IMR-90 (cell line): ENCODE measurements at regions of chr2 and their contacts with region 1.

Region 1: DNA sequence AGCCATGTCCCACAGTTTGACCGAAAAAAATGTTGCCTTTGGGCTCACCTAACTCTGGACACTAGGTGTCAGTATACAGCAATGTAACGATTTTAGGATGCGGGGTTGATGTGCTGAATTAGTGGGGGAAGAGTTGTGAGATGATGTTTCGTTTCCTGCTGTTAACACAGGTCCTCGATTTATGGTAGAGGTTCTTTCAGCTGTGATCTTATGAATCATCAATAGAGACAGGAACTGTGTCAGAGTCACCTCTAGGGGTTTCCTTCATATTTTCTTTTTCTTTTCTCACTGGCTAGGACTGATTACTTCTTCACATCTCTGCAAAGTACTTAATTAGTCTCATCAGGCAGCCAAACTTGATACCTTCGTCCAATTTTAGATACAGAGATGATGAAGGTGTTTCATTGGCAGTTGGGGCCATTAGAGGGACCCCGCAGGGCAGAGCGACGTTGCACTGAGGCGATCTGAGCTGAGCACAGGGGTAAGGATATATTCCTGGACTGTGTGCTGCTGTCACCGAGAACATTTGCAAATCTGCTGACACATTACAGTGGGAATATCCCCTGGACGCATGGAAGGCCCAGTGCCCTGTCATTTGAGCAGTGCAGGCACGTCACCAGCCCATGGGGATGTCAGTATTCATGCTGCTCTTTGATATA is 10.2 kb upstream of the MMADHC start:
- DNase-seq: peak; percentile 94
- ATAC-seq: peak; percentile 89
- H3K4me3 ChIP-seq: peak overlapping the region; percentile 13; the same call in 1 of the 2 replicates
- H3K27ac ChIP-seq: peak overlapping the region; percentile 64
- H3K4me1 ChIP-seq: peaks cover 8% of the 10 kb centered on the region
- H3K27me3 ChIP-seq: no peaks in the 10 kb centered on the region
- CTCF ChIP-seq: peak; percentile 93
- POLR2A ChIP-seq: 0 out of 2 replicates have a peak, but pooled peaks have one; percentile 40
- RAD21 ChIP-seq: peak; percentile 97

Region 2: GRCh38 chr2:149342523-149342922 is 255.3 kb before region 1 on chr2:
- CTCF ChIA-PET with region 1: no interaction called
- POLR2A ChIA-PET with region 1: no interaction called
- dilution Hi-C with region 1: no loop called
- in situ Hi-C with region 1: no loop called
- intact Hi-C with region 1: no loop called
- DNase-seq: no peak
- ATAC-seq: no peak
- H3K4me3 ChIP-seq: no peak overlapping the region
- H3K27ac ChIP-seq: no peak overlapping the region
- H3K4me1 ChIP-seq: no peaks in the 10 kb centered on the region
- H3K27me3 ChIP-seq: no peaks in the 10 kb centered on the region
- CTCF ChIP-seq: no peak
- POLR2A ChIP-seq: no peak
- RAD21 ChIP-seq: no peak

Region 3: DNA sequence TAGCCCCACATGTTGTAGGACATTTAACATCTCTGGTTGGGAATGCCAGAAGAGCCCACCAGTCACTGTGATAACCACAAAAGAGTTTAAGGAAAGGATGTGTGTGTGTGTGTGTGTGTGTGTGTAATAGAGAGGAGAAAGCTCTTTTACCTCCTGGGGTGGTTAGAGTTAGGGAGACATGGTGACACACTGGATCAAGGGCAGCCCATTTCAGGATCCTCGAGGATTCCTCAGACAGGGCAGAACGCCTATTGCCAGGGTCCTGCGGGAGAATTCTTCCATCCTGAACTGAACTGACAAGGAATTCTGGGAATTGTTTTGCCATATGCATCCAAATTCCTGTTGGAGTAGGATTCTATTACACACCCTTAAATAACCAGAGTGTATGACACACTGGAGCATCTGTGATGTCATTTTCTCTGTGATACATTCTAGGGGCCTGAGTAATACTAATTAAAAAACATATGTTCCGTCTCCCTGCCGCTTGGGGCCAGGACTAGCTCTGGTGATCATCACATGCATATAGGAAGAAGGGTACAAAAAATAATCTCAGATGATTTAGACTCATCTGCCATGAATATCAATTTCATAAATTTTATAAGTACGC is 146.1 kb after region 1 on chr2:
- CTCF ChIA-PET with region 1: interaction called, 4 read pairs
- POLR2A ChIA-PET with region 1: no interaction called
- dilution Hi-C with region 1: no loop called
- in situ Hi-C with region 1: no loop called
- intact Hi-C with region 1: loop called (anchors 5 kb)
- DNase-seq: peak; percentile 97
- ATAC-seq: peak; percentile 73
- H3K4me3 ChIP-seq: no peak overlapping the region
- H3K27ac ChIP-seq: peak overlapping the region; percentile 98
- H3K4me1 ChIP-seq: peaks cover 36% of the 10 kb centered on the region
- H3K27me3 ChIP-seq: no peaks in the 10 kb centered on the region
- CTCF ChIP-seq: peak; percentile 48
- POLR2A ChIP-seq: no peak
- RAD21 ChIP-seq: peak; percentile 53

Region 4: GRCh38 chr2:150097891-150098595 is 500.2 kb after region 1 on chr2:
- CTCF ChIA-PET with region 1: no interaction called
- POLR2A ChIA-PET with region 1: no interaction called
- dilution Hi-C with region 1: no loop called
- in situ Hi-C with region 1: no loop called
- intact Hi-C with region 1: loop called (anchors 10 kb)
- DNase-seq: peak; percentile 59
- ATAC-seq: peak; percentile 74
- H3K4me3 ChIP-seq: no peak overlapping the region
- H3K27ac ChIP-seq: no peak overlapping the region
- H3K4me1 ChIP-seq: peaks cover 4% of the 10 kb centered on the region; the same call in 1 of the 2 replicates
- H3K27me3 ChIP-seq: no peaks in the 10 kb centered on the region
- CTCF ChIP-seq: peak; percentile 44
- POLR2A ChIP-seq: no peak
- RAD21 ChIP-seq: no peak; the same call in 1 of the 2 replicates

Region 5: DNA sequence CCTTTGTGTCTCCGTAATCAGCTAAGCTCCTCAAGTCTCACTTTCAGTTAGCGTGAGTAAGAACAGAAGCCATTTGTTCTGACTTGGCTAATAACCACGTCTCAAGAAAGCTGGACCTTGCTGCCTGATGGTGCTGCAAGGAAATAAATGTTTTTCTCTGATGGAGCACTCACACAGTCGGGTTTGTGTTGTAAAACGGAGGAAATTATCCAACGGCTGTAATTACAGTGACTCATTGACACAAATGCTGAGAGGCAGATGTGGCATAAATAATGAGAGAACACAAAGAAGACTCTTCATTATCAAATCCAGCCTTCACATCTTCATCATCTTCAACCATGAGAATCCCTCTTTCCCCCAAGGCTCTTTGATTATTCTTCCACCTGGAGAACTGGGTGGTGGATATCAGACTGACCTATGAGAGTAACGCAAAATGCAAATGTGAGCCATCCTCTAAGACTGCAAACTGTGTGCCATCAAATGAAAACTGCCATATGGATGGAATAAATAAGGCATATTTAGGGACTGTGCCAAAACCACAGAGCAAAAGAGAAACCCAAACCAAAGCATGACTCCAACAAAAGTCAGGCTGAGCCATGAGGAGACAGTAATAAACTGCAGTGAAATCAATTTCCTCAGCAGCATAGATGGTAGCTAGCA is 637.1 kb after region 1 on chr2:
- CTCF ChIA-PET with region 1: no interaction called
- POLR2A ChIA-PET with region 1: no interaction called
- dilution Hi-C with region 1: no loop called
- in situ Hi-C with region 1: no loop called
- intact Hi-C with region 1: no loop called
- DNase-seq: peak; percentile 93
- ATAC-seq: peak; percentile 94
- H3K4me3 ChIP-seq: peak overlapping the region; percentile 20; the same call in 1 of the 2 replicates
- H3K27ac ChIP-seq: peak overlapping the region; percentile 88
- H3K4me1 ChIP-seq: peaks cover 6% of the 10 kb centered on the region
- H3K27me3 ChIP-seq: no peaks in the 10 kb centered on the region
- CTCF ChIP-seq: no peak
- POLR2A ChIP-seq: no peak
- RAD21 ChIP-seq: peak; percentile 27

Region 6: GRCh38 chr2:150271952-150272802 is 674.4 kb after region 1 on chr2:
- CTCF ChIA-PET with region 1: no interaction called
- POLR2A ChIA-PET with region 1: no interaction called
- dilution Hi-C with region 1: no loop called
- in situ Hi-C with region 1: no loop called
- intact Hi-C with region 1: loop called (anchors 5 kb)
- DNase-seq: peak; percentile 93
- ATAC-seq: peak; percentile 97
- H3K4me3 ChIP-seq: no peak overlapping the region
- H3K27ac ChIP-seq: peak overlapping the region; percentile 75; the same call in 1 of the 2 replicates
- H3K4me1 ChIP-seq: peaks cover 5% of the 10 kb centered on the region; the same call in 1 of the 2 replicates
- H3K27me3 ChIP-seq: no peaks in the 10 kb centered on the region
- CTCF ChIP-seq: no peak
- POLR2A ChIP-seq: no peak
- RAD21 ChIP-seq: no peak

Region 7: DNA sequence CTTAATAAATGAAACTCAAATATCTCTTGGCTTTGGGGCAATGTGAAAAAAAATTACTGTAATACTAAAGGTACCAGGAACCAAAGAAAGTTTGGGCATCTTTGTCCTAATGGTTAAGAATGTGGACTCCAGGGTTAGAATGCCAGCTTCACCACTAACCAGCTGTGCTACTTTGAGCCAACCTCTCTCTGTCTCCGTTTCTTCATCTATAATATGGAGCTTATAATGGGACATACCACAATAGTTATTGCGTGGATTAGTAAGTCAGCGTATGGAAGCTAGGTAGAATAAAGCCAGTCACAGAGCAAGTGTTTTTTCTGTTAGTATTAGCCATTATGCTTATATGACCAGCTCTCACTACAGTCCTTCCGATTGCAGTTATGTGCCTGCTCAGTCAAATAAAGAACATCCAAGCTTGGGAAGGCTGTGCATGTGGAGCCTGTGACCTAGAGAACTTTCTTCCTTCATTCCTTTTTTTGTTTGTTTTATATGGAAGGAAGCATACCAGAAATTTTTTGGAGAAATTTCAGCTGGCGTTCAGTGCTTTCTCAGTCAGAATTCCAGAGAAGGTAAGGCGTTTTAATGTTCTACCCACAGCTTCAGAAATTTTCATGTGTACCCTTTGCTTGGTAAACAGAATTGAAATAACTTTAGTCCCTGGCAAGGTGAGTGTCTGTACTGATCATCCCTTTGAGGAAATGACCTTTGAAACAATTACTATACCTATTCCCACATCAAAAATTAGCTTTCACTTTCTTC is 1003.7 kb after region 1 on chr2:
- CTCF ChIA-PET with region 1: no interaction called
- POLR2A ChIA-PET with region 1: no interaction called
- dilution Hi-C with region 1: no loop called
- in situ Hi-C with region 1: loop called (anchors 10 kb)
- intact Hi-C with region 1: no loop called
- DNase-seq: peak; percentile 81
- ATAC-seq: peak; percentile 94
- H3K4me3 ChIP-seq: no peak overlapping the region
- H3K27ac ChIP-seq: peak overlapping the region; percentile 90
- H3K4me1 ChIP-seq: peaks cover 9% of the 10 kb centered on the region
- H3K27me3 ChIP-seq: no peaks in the 10 kb centered on the region
- CTCF ChIP-seq: no peak
- POLR2A ChIP-seq: no peak
- RAD21 ChIP-seq: no peak

Region 8: GRCh38 chr2:151032741-151033191 is 1435.0 kb after region 1 on chr2:
- CTCF ChIA-PET with region 1: no interaction called
- POLR2A ChIA-PET with region 1: no interaction called
- dilution Hi-C with region 1: no loop called
- in situ Hi-C with region 1: loop called (anchors 25 kb)
- intact Hi-C with region 1: no loop called
- DNase-seq: peak; percentile 100
- ATAC-seq: peak; percentile 85
- H3K4me3 ChIP-seq: no peak overlapping the region
- H3K27ac ChIP-seq: peak overlapping the region; percentile 71; the same call in 1 of the 2 replicates
- H3K4me1 ChIP-seq: peaks cover 5% of the 10 kb centered on the region
- H3K27me3 ChIP-seq: no peaks in the 10 kb centered on the region
- CTCF ChIP-seq: no peak
- POLR2A ChIP-seq: no peak
- RAD21 ChIP-seq: no peak

Region 9: GRCh38 chr2:151437630-151438029 is 1839.8 kb after region 1 on chr2:
- CTCF ChIA-PET with region 1: no interaction called
- POLR2A ChIA-PET with region 1: no interaction called
- dilution Hi-C with region 1: no loop called
- in situ Hi-C with region 1: loop called (anchors 25 kb)
- intact Hi-C with region 1: no loop called
- DNase-seq: peak; percentile 18
- ATAC-seq: peak; percentile 70; the same call in 1 of the 2 replicates
- H3K4me3 ChIP-seq: no peak overlapping the region
- H3K27ac ChIP-seq: no peak overlapping the region
- H3K4me1 ChIP-seq: no peaks in the 10 kb centered on the region
- H3K27me3 ChIP-seq: no peaks in the 10 kb centered on the region
- CTCF ChIP-seq: peak; percentile 50
- POLR2A ChIP-seq: no peak
- RAD21 ChIP-seq: 0 out of 2 replicates have a peak, but pooled peaks have one; percentile 18